Activated T-helper 2 cell treated with anti-CD3 and anti-CD28 coated beads, Interferon-gamma antibody, Interleukin-2, Interleukin-4, amounts not matched to agents 10 μg/mL and 5 μg/mL and 100 μg/mL, durations not matched to agents 14 hours and 24 hours and 36 hours (primary cell): ENCODE measurements at regions of chr13 and their contacts with region 1.

Region 1: GRCh38 chr13:77492982-77493381 is 42.5 kb upstream of the SCEL start:
- DNase-seq: no peak
- H3K4me3 Mint-ChIP-seq: no peak overlapping the region
- H3K27ac Mint-ChIP-seq: no peak overlapping the region
- H3K4me1 Mint-ChIP-seq: no peaks in the 10 kb centered on the region
- H3K27me3 Mint-ChIP-seq: peaks cover 19% of the 10 kb centered on the region

Region 2: GRCh38 chr13:77565635-77566034 is 72.7 kb after region 1 on chr13:
- intact Hi-C with region 1: loop called (anchors 1 kb)
- DNase-seq: no peak
- H3K4me3 Mint-ChIP-seq: no peak overlapping the region
- H3K27ac Mint-ChIP-seq: no peak overlapping the region
- H3K4me1 Mint-ChIP-seq: no peaks in the 10 kb centered on the region
- H3K27me3 Mint-ChIP-seq: peaks cover 18% of the 10 kb centered on the region

Region 3: DNA sequence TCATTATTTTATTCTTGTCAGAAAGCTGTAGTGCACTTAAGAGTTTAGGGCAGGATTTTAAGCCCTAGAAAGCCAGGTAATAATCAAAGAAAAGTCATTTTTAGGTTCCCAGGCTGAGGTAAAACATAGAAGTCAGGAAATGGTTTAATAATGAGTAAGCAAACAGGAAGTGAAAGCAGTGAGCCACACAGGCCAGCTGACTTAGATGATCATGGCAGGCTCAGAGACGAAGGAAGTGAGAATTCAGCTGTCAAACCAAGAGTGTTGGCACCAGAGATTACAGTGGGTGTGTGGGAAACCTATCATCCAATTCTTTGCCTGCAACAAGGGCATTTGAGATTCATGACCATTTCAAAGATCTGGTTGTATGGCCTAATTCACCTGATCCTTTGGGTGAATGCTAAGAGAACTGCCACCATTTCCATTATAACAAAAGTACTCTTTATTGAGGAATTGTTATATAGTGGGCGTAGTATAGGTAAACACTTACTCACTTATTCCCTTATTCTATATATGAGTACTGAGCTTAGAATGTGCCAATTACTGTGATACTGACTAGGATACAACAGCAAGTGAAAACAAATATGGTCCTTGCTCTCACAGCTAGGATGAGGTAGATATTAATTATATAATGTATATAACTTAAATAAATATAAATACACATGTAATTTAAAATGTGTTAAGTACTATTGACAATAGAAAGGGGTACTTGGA is 529.3 kb after region 1 on chr13:
- intact Hi-C with region 1: no loop called
- DNase-seq: peak; percentile 32
- H3K4me3 Mint-ChIP-seq: no peak overlapping the region
- H3K27ac Mint-ChIP-seq: no peak overlapping the region
- H3K4me1 Mint-ChIP-seq: peaks cover 10% of the 10 kb centered on the region
- H3K27me3 Mint-ChIP-seq: no peaks in the 10 kb centered on the region